ENCODE measurements at regions of chr20 and their contacts with region 1.

Region 1: GRCh38 chr20:25294459-25295385 is 46.8 kb downstream of the PYGB start:
- DNase-seq: peak; percentile 71 to 86 (median 86)
- H3K4me3 ChIP-seq: no peak overlapping the region
- H3K27ac ChIP-seq: no peak overlapping the region
- H3K4me1 ChIP-seq: peaks cover 0 to 4% (median 2%) of the 10 kb centered on the region in 4 experiments
- H3K27me3 ChIP-seq: no peaks in the 10 kb centered on the region

Region 2: DNA sequence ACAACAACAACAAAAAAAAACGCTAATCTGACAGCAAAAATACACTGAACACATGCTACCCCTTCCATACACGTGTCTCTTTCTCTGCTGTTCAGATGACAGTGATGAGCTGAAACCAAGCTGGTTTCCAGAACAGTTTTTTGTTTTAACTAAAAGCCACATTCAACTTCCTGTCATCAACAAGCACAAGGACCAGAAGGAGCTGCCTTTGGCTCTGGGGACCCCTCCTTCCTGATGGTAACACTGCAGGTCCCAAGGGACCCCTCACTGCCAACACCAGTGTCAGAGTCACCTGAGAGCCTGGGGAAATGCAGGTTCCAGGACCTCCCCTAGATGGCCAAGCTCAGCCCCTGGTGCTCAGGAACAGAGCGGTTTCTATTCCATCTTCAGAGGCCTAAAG is 339.7 kb before region 1 on chr20:
- CTCF ChIA-PET with region 1: no interaction called
- POLR2A ChIA-PET with region 1: no interaction called
- DNase-seq: peak in 2 of 3 donors; percentile 24 to 31
- H3K4me3 ChIP-seq: no peak overlapping the region
- H3K27ac ChIP-seq: no peak overlapping the region
- H3K4me1 ChIP-seq: peaks cover 0 to 39% (median 23%) of the 10 kb centered on the region in 4 experiments
- H3K27me3 ChIP-seq: no peaks in the 10 kb centered on the region

Region 3: GRCh38 chr20:25237610-25238318 is 57.0 kb before region 1 on chr20:
- CTCF ChIA-PET with region 1: no interaction called
- POLR2A ChIA-PET with region 1: no interaction called
- DNase-seq: peak in 2 of 3 donors; percentile 38 to 53
- H3K4me3 ChIP-seq: no peak overlapping the region
- H3K27ac ChIP-seq: no peak overlapping the region
- H3K4me1 ChIP-seq: no peaks in the 10 kb centered on the region
- H3K27me3 ChIP-seq: peaks cover 0 to 8% (median 2%) of the 10 kb centered on the region in 5 experiments

Region 4: GRCh38 chr20:25273541-25274358 is 21.0 kb before region 1 on chr20:
- CTCF ChIA-PET with region 1: interaction called, 16 read pairs
- POLR2A ChIA-PET with region 1: no interaction called
- DNase-seq: no peak
- H3K4me3 ChIP-seq: no peak overlapping the region
- H3K27ac ChIP-seq: no peak overlapping the region
- H3K4me1 ChIP-seq: no peaks in the 10 kb centered on the region
- H3K27me3 ChIP-seq: no peaks in the 10 kb centered on the region

Region 5: DNA sequence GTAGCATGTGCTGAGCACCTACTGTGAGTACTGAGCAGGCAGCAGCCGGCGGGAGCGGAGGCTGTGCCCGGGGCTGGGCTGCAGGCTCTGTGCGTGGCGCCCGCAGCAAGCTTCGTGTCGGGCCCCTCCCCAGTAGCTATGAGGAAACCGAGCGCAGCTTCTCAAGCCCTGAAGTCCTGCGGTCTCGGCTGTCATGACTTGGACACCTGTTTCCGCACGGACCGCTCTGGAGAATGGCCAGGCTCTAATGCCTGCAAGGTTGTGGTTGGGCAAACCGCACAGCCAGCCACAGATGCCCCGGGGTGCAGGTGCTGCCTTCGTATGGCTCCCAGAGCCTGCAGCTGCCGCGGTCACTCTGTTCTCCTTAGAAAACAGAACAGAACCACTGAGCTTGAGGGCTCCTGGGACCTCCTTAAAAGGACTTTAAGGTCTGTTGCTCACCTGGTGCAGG is 13.2 kb before region 1 on chr20:
- CTCF ChIA-PET with region 1: interaction called, 10 read pairs
- POLR2A ChIA-PET with region 1: no interaction called
- DNase-seq: peak in 1 of 3 donors; percentile 38
- H3K4me3 ChIP-seq: no peak overlapping the region
- H3K27ac ChIP-seq: no peak overlapping the region
- H3K4me1 ChIP-seq: no peaks in the 10 kb centered on the region
- H3K27me3 ChIP-seq: no peaks in the 10 kb centered on the region

Region 6: GRCh38 chr20:25399037-25399430 is 104.3 kb after region 1 on chr20:
- CTCF ChIA-PET with region 1: interaction called, 78 read pairs
- POLR2A ChIA-PET with region 1: no interaction called
- DNase-seq: peak; percentile 59 to 74 (median 67)
- H3K4me3 ChIP-seq: no peak overlapping the region
- H3K27ac ChIP-seq: no peak overlapping the region
- H3K4me1 ChIP-seq: no peaks in the 10 kb centered on the region
- H3K27me3 ChIP-seq: no peaks in the 10 kb centered on the region

Measured in common myeloid progenitor, CD34-positive (primary cell).